MCF 10A (cell line): ENCODE measurements at regions of chr5 and their contacts with region 1.

Region 1: GRCh38 chr5:81851481-81852178 is 100.7 kb upstream of the SSBP2 start:
- DNase-seq: peak; percentile 91
- H3K4me3 Mint-ChIP-seq: peak overlapping the region; percentile 83
- H3K27ac Mint-ChIP-seq: peak overlapping the region; percentile 84
- H3K4me1 Mint-ChIP-seq: peaks cover 33% of the 10 kb centered on the region
- H3K27me3 Mint-ChIP-seq: no peaks in the 10 kb centered on the region
- CTCF ChIP-seq: no peak

Region 2: GRCh38 chr5:81779125-81779915 is 72.3 kb before region 1 on chr5:
- CTCF ChIA-PET with region 1: no interaction called
- POLR2A ChIA-PET with region 1: interaction called, 12 read pairs
- intact Hi-C with region 1: no loop called
- DNase-seq: peak; percentile 16
- H3K4me3 Mint-ChIP-seq: peak overlapping the region; percentile 38
- H3K27ac Mint-ChIP-seq: peak overlapping the region; percentile 81
- H3K4me1 Mint-ChIP-seq: peaks cover 18% of the 10 kb centered on the region
- H3K27me3 Mint-ChIP-seq: no peaks in the 10 kb centered on the region
- CTCF ChIP-seq: no peak

Region 3: DNA sequence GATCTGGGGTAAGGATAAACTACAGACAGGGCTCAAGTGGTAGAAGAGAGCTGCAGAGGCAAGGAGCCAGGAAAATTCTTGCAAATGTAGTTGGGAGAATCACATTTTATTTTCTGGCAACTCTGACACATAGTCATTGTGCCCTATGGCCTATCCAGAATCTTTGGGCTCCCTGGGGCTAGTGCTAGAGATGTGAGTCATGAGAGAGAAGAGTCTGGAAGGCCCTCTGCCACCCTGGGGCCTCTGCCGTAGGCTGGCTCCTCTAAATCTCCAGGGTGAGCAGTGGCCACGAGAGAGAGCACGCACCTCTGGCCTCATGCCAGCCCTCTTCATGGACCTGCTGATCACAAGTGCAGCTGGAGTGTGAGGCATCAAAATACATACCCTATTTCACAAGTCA is 26.4 kb before region 1 on chr5:
- CTCF ChIA-PET with region 1: interaction called, 6 read pairs
- POLR2A ChIA-PET with region 1: interaction called, 16 read pairs
- intact Hi-C with region 1: no loop called
- DNase-seq: peak; percentile 92
- H3K4me3 Mint-ChIP-seq: peak overlapping the region; percentile 19
- H3K27ac Mint-ChIP-seq: peak overlapping the region; percentile 69
- H3K4me1 Mint-ChIP-seq: peaks cover 17% of the 10 kb centered on the region
- H3K27me3 Mint-ChIP-seq: no peaks in the 10 kb centered on the region
- CTCF ChIP-seq: no peak

Region 4: DNA sequence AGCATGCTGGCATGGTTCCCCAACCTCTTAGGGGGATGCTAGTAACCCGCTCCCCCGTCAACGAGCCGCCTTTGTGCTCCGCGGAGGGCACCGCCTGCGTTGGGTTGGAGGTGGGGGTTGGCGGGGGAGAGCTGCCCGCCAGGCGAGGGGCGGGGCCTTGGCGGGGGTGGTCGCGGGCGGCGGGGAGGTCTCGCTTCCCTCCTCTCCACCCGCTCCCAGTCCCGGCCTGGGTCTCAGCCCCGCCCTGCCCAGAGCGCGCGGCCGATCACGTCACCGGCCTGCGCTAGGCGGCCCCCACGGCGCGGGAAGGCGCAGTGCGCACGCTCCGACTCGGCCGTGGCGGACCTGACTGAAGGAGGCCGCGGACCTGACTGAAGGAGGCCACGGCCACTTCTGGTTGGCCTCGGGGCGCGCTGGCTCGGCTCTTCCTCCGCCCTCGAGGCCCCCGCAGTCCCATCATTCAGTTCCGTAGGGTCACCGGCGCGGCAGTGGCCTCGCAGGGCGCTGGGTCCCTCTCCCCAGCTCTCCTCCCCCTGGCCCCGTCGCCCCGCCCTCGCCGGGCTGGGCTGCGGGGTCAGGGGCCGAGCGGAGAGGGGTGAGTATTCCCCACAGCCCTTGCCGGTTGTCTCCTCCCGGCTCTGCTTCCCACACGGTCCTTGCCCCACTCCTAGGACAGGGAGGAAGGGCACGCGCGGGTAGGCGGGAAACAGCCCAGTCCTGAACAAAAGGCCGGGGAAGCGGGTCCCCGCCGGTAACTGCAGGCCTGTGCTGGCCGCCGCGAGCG is 120.3 kb after region 1 on chr5 and contains the start of gene ATG10:
- CTCF ChIA-PET with region 1: interaction called, 5 read pairs
- POLR2A ChIA-PET with region 1: interaction called, 23 read pairs
- intact Hi-C with region 1: loop called (anchors 2 kb)
- DNase-seq: peak; percentile 86
- H3K4me3 Mint-ChIP-seq: peak within 1 kb of the TSS; percentile 95
- H3K27ac Mint-ChIP-seq: peak within 1 kb of the TSS; percentile 96
- H3K4me1 Mint-ChIP-seq: peaks cover 19% of the 10 kb centered on the region
- H3K27me3 Mint-ChIP-seq: no peaks in the 10 kb centered on the region
- CTCF ChIP-seq: no peak
- total RNA-seq, gene ATG10: 9.9 and 11.1 TPM in 2 replicates